ENCODE measurements at regions of chr7 and their contacts with region 1.

Region 1: GRCh38 chr7:52465216-52465615 is 570.2 kb upstream of the POM121L12 start:
- DNase-seq: no peak
- H3K4me3 ChIP-seq: no peak overlapping the region
- CTCF ChIP-seq: no peak
- POLR2A ChIP-seq: no peak

Region 2: DNA sequence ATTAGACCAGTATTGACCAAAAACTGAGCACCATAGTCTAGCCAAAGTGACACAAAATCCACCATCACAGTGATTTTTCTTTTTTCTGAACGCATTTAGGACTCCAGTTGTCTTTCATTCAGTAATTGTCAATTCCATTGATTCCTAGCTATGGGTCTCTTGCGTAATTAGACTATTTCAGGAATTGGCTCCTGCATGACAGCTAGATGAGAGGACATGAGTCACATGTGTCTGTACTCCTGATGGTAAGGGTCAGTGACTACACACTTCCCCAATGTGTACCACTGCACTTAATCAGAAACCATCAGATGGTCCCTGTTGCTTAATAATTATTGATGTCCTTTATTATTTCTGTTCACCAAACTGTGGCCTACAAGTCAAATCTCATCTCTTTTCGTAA is 1039.7 kb after region 1 on chr7:
- intact Hi-C with region 1: loop called (anchors 5 kb)
- DNase-seq: no peak
- H3K4me3 ChIP-seq: no peak overlapping the region
- CTCF ChIP-seq: no peak
- POLR2A ChIP-seq: no peak